Heart right ventricle (tissue), 16 donors: ENCODE measurements at regions of chr4 and their contacts with region 1.

Region 1: GRCh38 chr4:75724066-75724866 is at the start of gene USO1:
- DNase-seq: peak; percentile 99
- ATAC-seq: peak; percentile 97 to 99 (median 98)
- H3K4me3 ChIP-seq: peak within 1 kb of the TSS; percentile 69 to 99 (median 89)
- H3K27ac ChIP-seq: peak within 1 kb of the TSS; percentile 64 to 99 (median 97)
- H3K4me1 ChIP-seq: peaks cover 3 to 57% (median 43%) of the 10 kb centered on the region in 9 donors
- H3K27me3 ChIP-seq: no peaks in the 10 kb centered on the region
- CTCF ChIP-seq: peak; percentile 35 to 78 (median 69)
- total RNA-seq, gene USO1: 71.2 to 98.7 (median 81.5) TPM

Region 2: DNA sequence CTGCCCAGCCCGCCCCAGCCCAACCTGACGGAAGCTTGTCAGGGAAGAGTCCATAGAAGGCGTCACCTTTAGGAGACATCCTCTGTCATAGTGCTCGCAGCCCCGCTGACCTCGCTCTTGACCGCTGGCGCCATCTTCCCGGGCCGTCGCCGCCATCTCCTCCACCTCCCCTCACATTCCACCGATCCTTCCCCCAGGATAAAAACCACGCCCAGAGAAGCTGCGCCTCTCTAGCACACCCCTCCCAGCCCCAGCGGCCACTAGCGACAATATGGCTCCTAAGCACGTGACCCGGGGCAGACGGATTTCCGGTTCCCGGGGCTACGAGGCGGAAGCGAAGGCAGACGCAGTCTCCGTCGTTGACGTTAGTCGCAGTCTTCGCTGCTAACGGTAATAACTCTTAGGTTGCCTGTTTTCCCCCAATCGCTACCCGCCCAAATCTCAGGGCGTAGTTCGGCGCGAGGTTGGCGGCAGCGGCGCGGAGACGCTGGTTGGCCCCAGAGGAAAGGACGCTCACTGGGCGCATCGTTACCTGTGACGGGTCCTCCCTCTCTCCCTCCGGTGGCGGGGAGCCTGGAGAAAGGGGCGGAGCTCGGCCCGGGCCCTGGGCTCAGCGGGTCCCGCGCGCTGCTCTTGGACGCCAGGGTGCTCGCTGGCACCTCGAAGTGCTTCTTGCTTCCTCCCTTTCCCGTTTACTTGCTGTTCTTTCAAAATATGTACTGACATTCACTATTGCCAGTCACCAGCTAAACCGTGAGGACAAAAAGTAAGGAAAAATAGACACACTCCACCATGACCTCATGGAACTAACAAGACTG is 209.9 kb before region 1 on chr4 and contains the starts of genes RCHY1 and THAP6:
- intact Hi-C with region 1: loop called in 1 of 10 experiments (anchors 10 kb)
- DNase-seq: peak; percentile 94 to 97
- ATAC-seq: peak; percentile 98 to 99 (median 98)
- H3K4me3 ChIP-seq: peak within 1 kb of the TSS; percentile 64 to 77 (median 72)
- H3K27ac ChIP-seq: peak within 1 kb of the TSS; percentile 80 to 97 (median 94)
- H3K4me1 ChIP-seq: peaks cover 0 to 60% (median 52%) of the 10 kb centered on the region in 9 donors
- H3K27me3 ChIP-seq: no peaks in the 10 kb centered on the region
- CTCF ChIP-seq: peak in 2 of 9 donors; percentile 1 to 36
- total RNA-seq, gene RCHY1: 37.4 to 62.0 (median 50.3) TPM
- total RNA-seq, gene THAP6: 13.0 to 21.7 (median 18.3) TPM

Region 3: GRCh38 chr4:75630174-75630936 is 93.9 kb before region 1 on chr4 and contains the start of gene CDKL2:
- intact Hi-C with region 1: no loop called
- DNase-seq: peak; percentile 70 to 81
- ATAC-seq: peak; percentile 88 to 97 (median 94)
- H3K4me3 ChIP-seq: peak within 1 kb of the TSS; percentile 47 to 78 (median 60)
- H3K27ac ChIP-seq: no peak within 1 kb of the TSS
- H3K4me1 ChIP-seq: peaks cover 0 to 14% (median 10%) of the 10 kb centered on the region in 9 donors
- H3K27me3 ChIP-seq: peaks cover 0 to 7% (median 0%) of the 10 kb centered on the region in 7 donors
- CTCF ChIP-seq: no peak
- total RNA-seq, gene CDKL2: 0.10 to 0.56 (median 0.34) TPM in 9 of 10 donors, not detected in the other

Region 4: DNA sequence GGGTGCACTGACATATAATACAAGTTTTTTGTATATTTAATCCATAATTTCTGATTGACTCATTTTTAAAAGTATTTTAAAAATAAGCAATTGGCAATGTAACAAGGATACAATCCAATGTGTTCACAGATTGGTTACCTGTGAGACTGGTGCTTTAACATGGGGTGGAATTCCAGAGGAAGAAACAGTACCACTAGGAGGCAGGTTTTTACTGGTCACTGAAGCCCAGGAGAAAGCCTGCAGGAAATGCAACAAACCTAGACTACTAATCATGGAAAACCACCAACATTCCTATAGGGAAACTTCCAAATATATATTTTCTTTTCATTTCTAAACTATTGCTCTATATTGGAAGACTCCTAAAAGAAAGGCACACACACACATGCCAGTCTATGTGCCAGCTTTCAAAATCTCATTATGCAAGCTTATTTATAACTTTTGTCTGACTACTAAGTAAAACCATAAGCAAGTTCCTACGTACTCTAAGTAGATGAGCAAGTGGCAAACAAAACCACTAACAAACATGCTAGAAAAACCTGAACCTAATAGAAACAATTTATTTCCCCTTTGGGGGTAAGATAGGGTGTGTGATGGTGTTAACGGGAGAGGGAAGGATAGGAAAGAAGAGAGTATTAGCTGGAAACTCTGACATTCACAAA is 70.3 kb before region 1 on chr4:
- intact Hi-C with region 1: loop called in 1 of 10 experiments (anchors 5 kb)
- DNase-seq: no peak
- ATAC-seq: peak in 4 of 8 donors; percentile 51 to 61 (median 54)
- H3K4me3 ChIP-seq: no peak overlapping the region
- H3K27ac ChIP-seq: no peak overlapping the region
- H3K4me1 ChIP-seq: peaks cover 0 to 6% (median 0%) of the 10 kb centered on the region in 9 donors
- H3K27me3 ChIP-seq: no peaks in the 10 kb centered on the region
- CTCF ChIP-seq: peak; percentile 18 to 65 (median 47)

Region 5: DNA sequence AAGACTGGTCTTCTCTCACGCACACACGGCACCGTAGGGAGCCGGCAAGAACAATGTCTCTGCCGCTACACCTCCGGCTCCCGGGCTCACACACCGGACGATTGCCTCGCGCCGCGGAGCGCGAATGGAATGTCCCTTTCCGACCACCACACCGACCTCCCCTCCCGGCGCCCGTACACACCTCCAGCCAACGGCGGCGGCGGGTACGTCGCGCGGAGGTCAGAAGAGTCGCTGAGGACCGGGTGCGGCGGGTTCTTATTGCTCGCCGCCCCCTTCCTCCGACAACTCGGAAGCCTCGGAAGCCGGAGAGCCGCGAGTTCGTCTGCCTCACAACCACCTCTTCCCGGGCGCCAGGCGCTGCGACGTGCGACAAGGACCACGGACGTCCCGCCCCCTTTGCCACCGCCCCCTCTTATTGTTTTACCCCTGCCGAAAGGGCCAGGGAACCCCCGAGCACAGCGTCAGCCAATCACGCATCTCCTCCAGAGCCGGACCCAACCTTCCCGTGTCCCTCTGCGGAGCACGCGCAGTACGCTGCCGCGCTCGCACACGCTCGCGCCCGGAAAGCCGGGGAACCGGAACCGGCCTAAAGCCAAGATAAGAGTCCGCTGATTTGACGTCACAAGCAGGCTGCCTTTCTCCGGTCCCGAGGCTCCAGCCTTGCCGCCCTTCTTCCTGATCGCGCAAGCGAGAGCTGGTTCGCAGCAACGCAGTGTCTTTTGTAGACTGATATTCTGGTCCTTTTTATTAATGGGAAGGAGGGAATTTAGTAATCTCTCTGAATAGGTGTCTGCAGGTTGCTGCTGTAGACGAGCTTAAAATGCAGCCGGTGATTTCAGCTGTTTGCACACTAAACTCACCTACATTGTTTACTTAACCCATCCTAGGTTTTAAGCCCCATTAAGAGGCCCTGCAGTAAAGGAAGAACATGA is 51.0 kb before region 1 on chr4 and contains the start of gene G3BP2:
- intact Hi-C with region 1: loop called (anchors 1 to 10 kb)
- DNase-seq: peak; percentile 98
- ATAC-seq: peak; percentile 99 to 100 (median 99)
- H3K4me3 ChIP-seq: peak within 1 kb of the TSS; percentile 69 to 98 (median 90)
- H3K27ac ChIP-seq: peak within 1 kb of the TSS; percentile 89 to 99 (median 97)
- H3K4me1 ChIP-seq: peaks cover 8 to 48% (median 41%) of the 10 kb centered on the region in 9 donors
- H3K27me3 ChIP-seq: no peaks in the 10 kb centered on the region
- CTCF ChIP-seq: no peak
- total RNA-seq, gene G3BP2: 75.7 to 119 (median 89.8) TPM

Region 6: GRCh38 chr4:75745161-75745560 is 20.9 kb after region 1 on chr4:
- intact Hi-C with region 1: loop called in 1 of 10 experiments (anchors 2 kb)
- DNase-seq: no peak
- ATAC-seq: peak in 7 of 8 donors; percentile 61 to 94 (median 79)
- H3K4me3 ChIP-seq: no peak overlapping the region
- H3K27ac ChIP-seq: peak overlapping the region in 6 of 10 donors; percentile 8 to 53 (median 36)
- H3K4me1 ChIP-seq: peaks cover 2 to 42% (median 30%) of the 10 kb centered on the region in 9 donors
- H3K27me3 ChIP-seq: no peaks in the 10 kb centered on the region
- CTCF ChIP-seq: no peak

Region 7: GRCh38 chr4:75985116-75985515 is 260.9 kb after region 1 on chr4:
- intact Hi-C with region 1: no loop called
- DNase-seq: no peak
- ATAC-seq: no peak
- H3K4me3 ChIP-seq: no peak overlapping the region
- H3K27ac ChIP-seq: no peak overlapping the region
- H3K4me1 ChIP-seq: peaks cover 0 to 24% (median 17%) of the 10 kb centered on the region in 9 donors
- H3K27me3 ChIP-seq: no peaks in the 10 kb centered on the region
- CTCF ChIP-seq: no peak

Region 8: DNA sequence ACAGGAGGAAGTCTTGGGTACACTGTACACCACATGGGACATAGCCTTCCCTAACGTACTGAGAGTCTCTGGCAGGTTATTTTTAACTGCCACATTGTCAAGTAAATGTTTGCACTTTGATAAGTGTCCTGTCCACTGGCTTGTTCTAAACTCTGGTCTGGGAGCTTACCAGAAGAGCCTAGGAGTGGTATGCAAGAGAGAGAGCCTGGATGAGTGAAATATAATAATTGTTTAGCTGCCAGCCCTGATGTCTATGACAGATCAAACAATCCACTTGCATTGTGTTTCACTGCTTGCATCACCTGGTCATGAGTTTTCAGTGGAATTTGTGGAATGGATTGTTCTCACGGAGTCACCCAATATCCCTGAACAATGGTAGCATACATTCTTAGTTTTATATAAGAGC is 802.3 kb after region 1 on chr4:
- intact Hi-C with region 1: no loop called
- DNase-seq: no peak
- ATAC-seq: peak; percentile 71 to 96 (median 93)
- H3K4me3 ChIP-seq: no peak overlapping the region
- H3K27ac ChIP-seq: peak overlapping the region in 9 of 10 donors; percentile 60 to 79 (median 74)
- H3K4me1 ChIP-seq: peaks cover 0 to 30% (median 6%) of the 10 kb centered on the region in 9 donors
- H3K27me3 ChIP-seq: no peaks in the 10 kb centered on the region
- CTCF ChIP-seq: no peak